CD4-positive, alpha-beta memory T cell (primary cell): ENCODE measurements at regions of chr1 and their contacts with region 1.

Region 1: GRCh38 chr1:147640553-147641165 is 29.7 kb downstream of the ACP6 start:
- DNase-seq: peak; percentile 72 to 85 (median 73)
- H3K4me3 ChIP-seq: no peak overlapping the region
- H3K4me3 Mint-ChIP-seq: peak overlapping the region in 7 of 8 donors; percentile 48 to 80 (median 69)
- H3K27ac ChIP-seq: no peak overlapping the region
- H3K27ac Mint-ChIP-seq: peak overlapping the region in 5 of 7 donors; percentile 74 to 92 (median 79)
- H3K4me1 ChIP-seq: peaks cover 24% of the 10 kb centered on the region
- H3K4me1 Mint-ChIP-seq: peaks cover 26 to 66% (median 44%) of the 10 kb centered on the region in 4 donors
- H3K27me3 ChIP-seq: no peaks in the 10 kb centered on the region
- H3K27me3 Mint-ChIP-seq: no peaks in the 10 kb centered on the region

Region 2: DNA sequence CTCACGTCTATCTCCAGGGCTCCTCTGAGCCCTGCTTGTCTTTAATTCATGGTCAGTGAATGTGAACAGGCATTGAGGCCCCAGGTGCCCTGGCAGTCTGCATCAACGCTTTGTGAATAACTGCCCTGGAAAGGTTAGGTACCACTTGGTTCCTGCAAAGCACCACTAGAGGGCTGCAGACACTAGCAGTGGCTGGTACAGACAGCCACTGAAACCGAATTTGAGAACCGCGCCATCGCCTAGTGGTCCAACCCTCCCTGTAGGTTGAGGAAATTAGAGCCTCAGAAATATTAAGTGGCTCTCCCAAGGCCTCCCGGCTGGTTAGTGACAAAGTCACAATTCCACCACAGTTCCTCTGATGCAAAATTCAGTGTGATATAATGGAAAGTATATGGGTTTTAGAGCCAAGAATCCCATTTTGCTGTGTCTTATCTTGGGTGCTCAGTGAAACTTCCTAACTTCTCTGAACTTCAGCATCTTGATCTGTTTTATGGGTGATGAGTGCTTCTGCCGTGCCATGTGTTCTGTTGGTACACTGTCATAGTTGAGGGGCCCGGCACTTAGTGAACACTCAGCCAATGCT is 145.6 kb before region 1 on chr1:
- CTCF ChIA-PET with region 1: interaction called, 26 read pairs
- POLR2A ChIA-PET with region 1: no interaction called
- intact Hi-C with region 1: loop called (anchors 1 kb)
- DNase-seq: peak; percentile 65 to 70 (median 67)
- H3K4me3 ChIP-seq: no peak overlapping the region
- H3K4me3 Mint-ChIP-seq: peak overlapping the region in 2 of 8 donors; percentile 12 to 64
- H3K27ac ChIP-seq: no peak overlapping the region
- H3K27ac Mint-ChIP-seq: no peak overlapping the region
- H3K4me1 ChIP-seq: no peaks in the 10 kb centered on the region
- H3K4me1 Mint-ChIP-seq: peaks cover 0 to 2% (median under 1%) of the 10 kb centered on the region in 4 donors
- H3K27me3 ChIP-seq: no peaks in the 10 kb centered on the region
- H3K27me3 Mint-ChIP-seq: peaks cover 0 to 10% of the 10 kb centered on the region in 2 donors

Region 3: GRCh38 chr1:147527941-147528936 is 112.4 kb before region 1 on chr1:
- CTCF ChIA-PET with region 1: interaction called, 10 read pairs
- POLR2A ChIA-PET with region 1: no interaction called
- intact Hi-C with region 1: no loop called
- DNase-seq: peak in 3 of 5 donors; percentile 10 to 27 (median 15)
- H3K4me3 ChIP-seq: no peak overlapping the region
- H3K4me3 Mint-ChIP-seq: no peak overlapping the region
- H3K27ac ChIP-seq: no peak overlapping the region
- H3K27ac Mint-ChIP-seq: no peak overlapping the region
- H3K4me1 ChIP-seq: peaks cover 14% of the 10 kb centered on the region
- H3K4me1 Mint-ChIP-seq: peaks cover 0 to 3% (median 0%) of the 10 kb centered on the region in 4 donors
- H3K27me3 ChIP-seq: no peaks in the 10 kb centered on the region
- H3K27me3 Mint-ChIP-seq: peaks cover 0 to 7% of the 10 kb centered on the region in 2 donors

Region 4: DNA sequence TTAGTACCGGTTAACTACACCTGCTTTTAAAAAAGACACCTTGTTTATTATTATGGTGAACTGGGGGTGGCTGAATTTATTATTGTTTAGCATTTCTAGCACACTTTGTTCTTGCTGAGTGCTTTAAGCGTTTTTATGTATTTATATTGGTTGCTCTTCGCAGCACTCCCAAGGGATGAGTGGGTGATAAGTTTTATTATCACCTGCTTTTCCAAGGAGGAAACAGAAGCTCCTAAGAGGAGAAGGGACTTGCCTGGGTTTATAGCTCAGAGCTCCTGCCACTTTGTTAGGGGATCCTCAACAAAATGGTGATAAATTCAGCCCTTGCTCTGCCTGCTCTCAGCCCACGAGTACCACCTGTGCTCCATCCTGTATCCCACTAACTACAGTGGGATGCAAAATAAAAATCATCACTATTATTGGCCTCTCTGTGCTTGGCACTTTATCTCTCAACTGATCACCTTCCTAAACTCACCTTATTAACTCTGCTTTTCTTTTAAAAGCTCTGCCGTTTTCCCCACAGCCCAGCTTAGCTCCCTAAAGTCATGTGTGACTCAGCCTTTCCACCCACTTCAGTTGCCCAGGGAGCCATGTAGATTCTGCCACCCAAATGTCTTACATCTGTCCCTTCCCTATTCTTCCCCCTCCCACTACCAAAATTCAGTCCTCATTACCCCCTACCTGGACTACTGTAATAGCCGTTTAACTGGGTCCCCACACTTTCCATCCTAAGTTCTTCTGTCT is 54.8 kb before region 1 on chr1:
- CTCF ChIA-PET with region 1: no interaction called
- POLR2A ChIA-PET with region 1: no interaction called
- intact Hi-C with region 1: no loop called
- DNase-seq: no peak
- H3K4me3 ChIP-seq: no peak overlapping the region
- H3K4me3 Mint-ChIP-seq: no peak overlapping the region
- H3K27ac ChIP-seq: no peak overlapping the region
- H3K27ac Mint-ChIP-seq: no peak overlapping the region
- H3K4me1 ChIP-seq: peaks cover 6% of the 10 kb centered on the region
- H3K4me1 Mint-ChIP-seq: peaks cover 4 to 10% (median 8%) of the 10 kb centered on the region in 4 donors
- H3K27me3 ChIP-seq: peaks cover 7% of the 10 kb centered on the region
- H3K27me3 Mint-ChIP-seq: peaks cover 16 to 22% of the 10 kb centered on the region in 2 donors

Region 5: DNA sequence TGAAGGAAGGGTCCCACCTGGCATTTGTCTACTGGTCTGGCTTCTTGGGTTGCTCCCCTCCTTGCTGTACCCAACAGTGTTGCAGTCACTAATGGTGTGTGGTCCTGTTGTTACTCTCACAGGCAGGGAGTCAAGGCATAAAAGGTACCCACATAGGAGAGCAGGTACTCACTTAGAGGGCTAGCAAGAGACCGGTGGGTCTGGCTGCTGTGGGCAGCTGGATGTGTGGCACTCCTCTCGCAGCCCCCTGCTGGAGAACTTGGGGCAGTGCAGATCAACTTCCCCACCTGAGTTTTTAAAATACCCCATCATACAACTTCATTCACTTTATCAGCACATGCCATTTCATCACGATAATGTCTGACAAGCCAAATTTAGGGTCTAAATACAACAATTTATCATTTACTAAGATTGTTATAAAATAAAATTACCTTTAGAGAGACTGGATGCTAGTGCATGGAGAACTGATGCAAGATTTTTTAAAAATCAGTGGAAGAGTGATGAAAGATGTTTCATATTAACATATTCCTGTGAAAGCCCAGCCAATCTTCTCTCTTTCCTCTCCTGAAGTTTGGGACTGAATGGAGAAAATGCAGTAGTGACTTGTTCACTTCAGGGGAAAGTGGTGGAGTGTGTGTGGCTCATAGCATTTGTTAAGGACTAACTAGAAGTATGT is 13.1 kb before region 1 on chr1:
- CTCF ChIA-PET with region 1: interaction called, 55 read pairs
- POLR2A ChIA-PET with region 1: no interaction called
- intact Hi-C with region 1: no loop called
- DNase-seq: peak in 4 of 5 donors; percentile 42 to 54 (median 46)
- H3K4me3 ChIP-seq: no peak overlapping the region
- H3K4me3 Mint-ChIP-seq: peak overlapping the region in 2 of 8 donors; percentile 13 to 18
- H3K27ac ChIP-seq: no peak overlapping the region
- H3K27ac Mint-ChIP-seq: peak overlapping the region in 4 of 7 donors; percentile 10 to 62 (median 35)
- H3K4me1 ChIP-seq: peaks cover 31% of the 10 kb centered on the region
- H3K4me1 Mint-ChIP-seq: peaks cover 31 to 46% (median 37%) of the 10 kb centered on the region in 4 donors
- H3K27me3 ChIP-seq: no peaks in the 10 kb centered on the region
- H3K27me3 Mint-ChIP-seq: no peaks in the 10 kb centered on the region

Region 6: DNA sequence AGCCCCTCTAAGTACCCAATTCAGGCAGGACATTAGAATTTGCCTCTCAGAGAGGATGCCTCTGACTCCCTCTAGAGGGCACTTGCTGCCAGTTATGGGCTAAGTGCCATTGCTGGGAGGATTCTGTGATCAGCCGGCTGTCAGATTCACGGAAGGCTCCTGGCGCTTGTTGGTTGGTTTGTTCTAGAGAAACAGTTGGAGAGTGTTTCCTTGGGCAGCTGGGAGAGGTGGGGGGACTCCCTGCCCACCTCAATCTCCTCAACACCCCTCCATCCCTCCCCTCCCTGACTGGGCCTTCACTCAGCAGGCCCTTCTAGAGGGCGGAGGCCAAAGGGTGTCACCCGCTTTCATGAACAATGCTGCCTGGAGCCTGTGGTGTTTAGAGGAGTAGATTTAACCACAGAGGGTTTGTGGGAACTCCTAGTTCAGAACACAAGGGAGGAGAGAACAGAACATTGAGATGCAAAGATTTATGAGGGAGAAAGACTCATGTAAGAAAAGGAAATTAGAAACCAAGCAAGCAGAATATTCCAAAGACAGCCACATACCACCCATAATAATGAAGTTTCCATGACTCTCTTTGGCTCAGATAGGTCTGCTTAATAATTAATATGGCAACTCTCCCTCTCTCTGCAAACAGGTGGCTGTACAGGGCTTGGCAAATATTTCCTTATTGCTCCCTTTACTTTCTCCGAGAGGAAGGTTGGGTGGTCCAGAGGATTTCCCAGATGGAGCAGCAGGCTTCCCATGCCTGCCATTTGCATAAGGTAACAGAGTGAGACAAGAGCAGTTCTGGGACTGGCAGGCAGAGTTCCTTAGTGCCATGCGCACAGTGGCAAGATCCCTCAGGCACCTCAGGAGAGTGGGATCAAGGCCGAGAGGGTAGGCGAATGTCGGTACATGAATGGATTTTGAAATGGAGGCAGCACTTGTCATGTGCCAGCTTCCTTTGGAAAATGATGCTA is 59.7 kb after region 1 on chr1:
- CTCF ChIA-PET with region 1: interaction called, 20 read pairs
- POLR2A ChIA-PET with region 1: no interaction called
- intact Hi-C with region 1: loop called (anchors 1 kb)
- DNase-seq: peak; percentile 63 to 70 (median 68)
- H3K4me3 ChIP-seq: no peak overlapping the region
- H3K4me3 Mint-ChIP-seq: peak overlapping the region in 7 of 8 donors; percentile 40 to 80 (median 70)
- H3K27ac ChIP-seq: peak overlapping the region; percentile 30
- H3K27ac Mint-ChIP-seq: peak overlapping the region; percentile 37 to 91 (median 73)
- H3K4me1 ChIP-seq: peaks cover 9% of the 10 kb centered on the region
- H3K4me1 Mint-ChIP-seq: peaks cover 12 to 21% (median 17%) of the 10 kb centered on the region in 4 donors
- H3K27me3 ChIP-seq: no peaks in the 10 kb centered on the region
- H3K27me3 Mint-ChIP-seq: peaks cover 5 to 9% of the 10 kb centered on the region in 2 donors